Tibial artery (tissue), 4 donors: ENCODE measurements at regions of chr12 and their contacts with region 1.

Region 1: GRCh38 chr12:15220994-15221885 is at the start of gene RERG:
- DNase-seq: peak; percentile 74 to 92
- H3K4me3 ChIP-seq: peak within 1 kb of the TSS; percentile 66 to 75
- H3K27ac ChIP-seq: peak within 1 kb of the TSS; percentile 90 to 93
- H3K4me1 ChIP-seq: peaks cover 0 to 49% (median 20%) of the 10 kb centered on the region in 4 donors
- H3K27me3 ChIP-seq: no peaks in the 10 kb centered on the region
- CTCF ChIP-seq: peak; percentile 99

Region 2: GRCh38 chr12:15001733-15002382 is 219.4 kb before region 1 on chr12:
- intact Hi-C with region 1: loop called (anchors 5 kb)
- DNase-seq: peak; percentile 57 to 87
- H3K4me3 ChIP-seq: no peak overlapping the region
- H3K27ac ChIP-seq: peak overlapping the region; percentile 25 to 45
- H3K4me1 ChIP-seq: peaks cover 0 to 35% (median 9%) of the 10 kb centered on the region in 4 donors
- H3K27me3 ChIP-seq: no peaks in the 10 kb centered on the region
- CTCF ChIP-seq: no peak

Region 3: DNA sequence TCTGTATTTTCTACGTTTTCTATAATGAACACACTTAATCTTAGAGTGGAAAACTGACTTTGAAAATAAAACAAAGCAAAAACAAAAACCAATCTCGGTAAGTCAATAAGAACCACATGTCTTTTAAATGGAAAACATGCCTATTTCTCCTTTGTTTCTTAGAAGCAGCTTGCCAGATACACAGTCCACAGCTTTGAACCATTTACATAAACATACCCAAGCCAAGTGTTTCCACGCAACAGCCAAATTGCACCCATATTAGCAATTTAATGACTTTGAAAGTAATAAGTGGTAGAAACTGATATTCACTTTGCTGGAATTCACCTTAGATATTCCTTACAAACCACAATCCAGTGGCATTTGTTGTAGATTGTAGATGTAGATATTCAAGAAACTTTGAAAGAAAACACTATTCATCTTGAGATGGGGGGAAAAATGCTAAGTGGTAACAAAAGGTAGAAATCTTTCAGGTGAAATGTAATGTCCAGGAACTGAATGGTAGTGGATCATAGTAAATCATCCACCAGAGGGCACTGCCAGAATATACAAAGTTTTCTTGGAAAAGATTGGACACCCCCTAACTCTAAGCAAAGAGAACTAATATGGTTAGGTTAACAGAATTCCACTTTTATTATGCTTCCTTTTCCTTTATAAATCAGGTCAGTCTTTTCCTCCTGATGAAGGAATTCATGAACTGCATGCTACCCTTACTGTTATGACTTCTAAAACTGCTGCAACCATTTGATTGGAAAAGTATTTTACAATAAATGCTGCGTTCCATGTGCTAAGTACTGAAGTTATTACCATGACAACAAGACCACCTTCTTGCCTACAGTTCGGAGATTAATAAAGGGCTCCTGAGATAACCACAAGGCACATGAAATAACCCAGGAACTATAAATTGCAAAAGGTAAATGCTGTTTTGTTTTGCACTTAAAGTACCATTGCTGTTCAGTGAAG is 69.8 kb before region 1 on chr12:
- intact Hi-C with region 1: loop called (anchors 2 kb)
- DNase-seq: no peak
- H3K4me3 ChIP-seq: no peak overlapping the region
- H3K27ac ChIP-seq: peak overlapping the region; percentile 87
- H3K4me1 ChIP-seq: peaks cover 0 to 90% (median 60%) of the 10 kb centered on the region in 4 donors
- H3K27me3 ChIP-seq: no peaks in the 10 kb centered on the region
- CTCF ChIP-seq: peak; percentile 64 to 67

Region 4: DNA sequence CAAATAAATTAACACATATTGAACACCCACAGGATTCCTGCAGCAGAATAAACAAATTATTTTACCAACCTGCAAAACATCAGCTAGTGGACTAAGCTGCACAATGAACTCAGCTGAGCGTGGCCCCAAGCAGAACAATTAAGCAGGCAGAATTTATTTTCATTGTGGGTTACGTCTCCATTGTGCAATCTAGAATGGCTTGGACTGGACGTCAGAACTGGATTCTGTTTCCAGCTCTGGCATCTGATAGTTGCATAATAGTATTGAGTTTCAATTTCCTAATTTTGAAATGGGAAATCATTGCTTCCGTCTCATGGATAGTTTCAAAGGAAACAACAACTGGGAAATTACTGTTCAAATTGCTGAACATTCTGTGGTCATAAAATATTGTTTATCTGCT is 35.5 kb after region 1 on chr12:
- intact Hi-C with region 1: no loop called
- DNase-seq: peak in 1 of 2 donors; percentile 59
- H3K4me3 ChIP-seq: no peak overlapping the region
- H3K27ac ChIP-seq: no peak overlapping the region
- H3K4me1 ChIP-seq: no peaks in the 10 kb centered on the region
- H3K27me3 ChIP-seq: no peaks in the 10 kb centered on the region
- CTCF ChIP-seq: no peak